ENCODE measurements at regions of chr2 and their contacts with region 1.

Region 1: GRCh38 chr2:207230261-207231105 is 64.7 kb upstream of the KLF7 start:
- DNase-seq: no peak
- ATAC-seq: peak in 2 of 4 donors; percentile 48 to 54
- H3K4me3 ChIP-seq: no peak overlapping the region
- H3K27ac ChIP-seq: peak overlapping the region in 5 of 12 donors; percentile 3 to 30 (median 27)
- H3K4me1 ChIP-seq: peaks cover 0 to 46% (median 23%) of the 10 kb centered on the region in 12 donors
- H3K27me3 ChIP-seq: no peaks in the 10 kb centered on the region
- CTCF ChIP-seq: peak; percentile 27 to 65 (median 46)
- POLR2A ChIP-seq: no peak

Region 2: GRCh38 chr2:207206011-207206410 is 24.5 kb before region 1 on chr2:
- intact Hi-C with region 1: no loop called
- DNase-seq: no peak
- ATAC-seq: no peak
- H3K4me3 ChIP-seq: no peak overlapping the region
- H3K27ac ChIP-seq: no peak overlapping the region
- H3K4me1 ChIP-seq: no peaks in the 10 kb centered on the region
- H3K27me3 ChIP-seq: no peaks in the 10 kb centered on the region
- CTCF ChIP-seq: no peak
- POLR2A ChIP-seq: no peak

Region 3: DNA sequence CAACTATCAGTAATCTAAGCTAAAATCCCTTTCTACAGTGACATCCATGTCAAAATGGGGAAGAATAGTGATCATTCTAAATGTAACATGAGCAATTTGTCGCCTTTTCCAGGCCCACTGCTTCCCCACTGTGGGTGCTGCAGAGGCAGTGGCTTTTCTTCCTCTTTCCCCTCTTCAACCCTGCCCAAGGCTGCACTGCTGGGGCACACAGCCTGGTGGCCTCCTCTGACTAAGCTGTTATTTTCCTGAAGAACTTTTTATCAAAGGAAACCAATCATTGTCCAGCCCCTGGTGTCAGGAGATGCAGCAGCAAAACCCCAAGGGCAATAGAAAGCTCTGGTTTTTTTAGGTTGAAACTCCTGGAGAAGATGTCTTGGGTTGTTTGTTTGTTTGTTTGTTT is 52.9 kb after region 1 on chr2:
- intact Hi-C with region 1: loop called in 1 of 10 experiments (anchors 5 kb)
- DNase-seq: peak; percentile 16 to 63 (median 38)
- ATAC-seq: peak; percentile 49 to 86 (median 78)
- H3K4me3 ChIP-seq: no peak overlapping the region
- H3K27ac ChIP-seq: peak overlapping the region in 3 of 12 donors; percentile 7 to 63 (median 9)
- H3K4me1 ChIP-seq: peaks cover 0 to 37% (median 16%) of the 10 kb centered on the region in 12 donors
- H3K27me3 ChIP-seq: no peaks in the 10 kb centered on the region
- CTCF ChIP-seq: peak in 3 of 12 donors; percentile 10 to 19 (median 11)
- POLR2A ChIP-seq: no peak

Region 4: DNA sequence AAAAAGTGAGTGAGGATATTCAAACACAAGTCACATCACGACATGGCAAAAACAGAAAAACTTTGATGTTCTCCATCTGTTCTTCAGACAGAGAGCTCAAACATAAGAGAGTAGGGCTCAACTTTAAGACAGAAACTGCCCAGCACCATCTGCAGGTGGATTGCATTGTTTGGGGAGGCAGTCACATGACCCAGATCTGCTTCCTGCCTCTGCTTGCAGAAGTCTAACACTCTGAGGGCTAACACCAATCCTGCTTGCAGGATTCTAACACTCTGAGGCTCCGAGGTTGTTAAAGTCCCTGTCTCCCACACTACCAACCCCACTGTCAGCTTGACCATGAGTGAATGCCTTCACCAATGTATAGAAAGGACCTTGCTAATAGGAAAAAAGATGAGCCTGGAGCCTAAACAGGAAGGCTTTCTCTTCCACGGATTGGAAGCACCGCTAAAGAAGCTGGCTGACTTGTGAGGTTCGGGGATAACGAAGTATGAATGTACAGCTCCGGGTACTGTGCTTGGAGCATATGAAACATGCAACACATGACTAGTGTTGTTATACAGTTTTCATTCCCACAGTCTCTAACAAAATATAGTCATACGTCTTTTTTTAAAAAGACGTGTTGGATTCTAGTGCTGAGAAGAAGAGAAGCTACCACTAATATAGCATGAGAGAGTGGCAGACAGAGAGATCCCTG is 122.6 kb after region 1 on chr2:
- intact Hi-C with region 1: no loop called
- DNase-seq: no peak
- ATAC-seq: peak; percentile 20 to 77 (median 52)
- H3K4me3 ChIP-seq: no peak overlapping the region
- H3K27ac ChIP-seq: no peak overlapping the region
- H3K4me1 ChIP-seq: peaks cover 0 to 6% (median 0%) of the 10 kb centered on the region in 12 donors
- H3K27me3 ChIP-seq: no peaks in the 10 kb centered on the region
- CTCF ChIP-seq: peak in 6 of 12 donors; percentile 8 to 32 (median 16)
- POLR2A ChIP-seq: no peak

Region 5: GRCh38 chr2:207662203-207662602 is 431.7 kb after region 1 on chr2:
- intact Hi-C with region 1: no loop called
- DNase-seq: no peak
- ATAC-seq: no peak
- H3K4me3 ChIP-seq: no peak overlapping the region
- H3K27ac ChIP-seq: no peak overlapping the region
- H3K4me1 ChIP-seq: no peaks in the 10 kb centered on the region
- H3K27me3 ChIP-seq: no peaks in the 10 kb centered on the region
- CTCF ChIP-seq: no peak
- POLR2A ChIP-seq: no peak